Mammary epithelial cell (primary cell): ENCODE measurements at regions of chr2 and their contacts with region 1.

Region 1: GRCh38 chr2:64488050-64488974 is 34.4 kb downstream of the LGALSL start:
- DNase-seq: peak; percentile 48
- H3K4me3 ChIP-seq: no peak overlapping the region
- H3K27ac ChIP-seq: no peak overlapping the region
- H3K4me1 ChIP-seq: peaks cover 20% of the 10 kb centered on the region
- H3K27me3 ChIP-seq: no peaks in the 10 kb centered on the region
- CTCF ChIP-seq: peak; percentile 85 to 93

Region 2: DNA sequence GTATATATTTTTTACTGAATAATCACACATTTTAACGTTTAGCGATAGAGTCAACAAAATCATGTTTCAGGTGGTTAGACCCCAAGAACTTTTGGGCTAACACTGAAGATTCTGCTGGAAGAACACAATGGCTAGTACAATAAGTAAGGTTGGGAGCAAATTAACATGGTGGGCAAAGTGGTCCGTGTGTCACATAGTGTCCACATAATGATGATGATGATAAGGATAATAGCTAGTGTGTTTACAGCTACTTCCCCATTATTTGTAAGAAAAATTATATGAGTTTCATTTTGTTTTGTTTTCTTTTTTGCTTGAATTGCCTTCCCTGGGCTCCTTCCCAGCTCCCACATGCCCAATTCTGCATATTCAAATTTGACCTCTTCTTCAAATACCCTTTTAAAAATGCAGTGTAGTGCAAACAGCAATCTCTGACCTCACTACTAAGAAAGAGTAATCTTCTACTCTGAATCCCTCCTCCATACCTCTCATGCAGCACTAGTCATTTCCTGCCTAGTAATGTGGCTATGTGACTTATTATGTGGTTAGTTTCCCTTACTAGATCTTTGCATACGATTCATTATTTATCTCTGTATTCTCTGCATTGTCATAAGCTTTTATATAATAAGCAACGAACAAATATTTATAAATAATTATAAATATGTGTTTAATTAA is 452.1 kb before region 1 on chr2:
- CTCF ChIA-PET with region 1: no interaction called
- dilution Hi-C with region 1: no loop called
- in situ Hi-C with region 1: loop called in 1 of 2 experiments (anchors 25 kb)
- intact Hi-C with region 1: no loop called
- DNase-seq: peak; percentile 78
- H3K4me3 ChIP-seq: no peak overlapping the region
- H3K27ac ChIP-seq: no peak overlapping the region
- H3K4me1 ChIP-seq: peaks cover 8% of the 10 kb centered on the region
- H3K27me3 ChIP-seq: no peaks in the 10 kb centered on the region
- CTCF ChIP-seq: no peak

Region 3: GRCh38 chr2:64062829-64063228 is 425.5 kb before region 1 on chr2:
- CTCF ChIA-PET with region 1: no interaction called
- dilution Hi-C with region 1: no loop called
- in situ Hi-C with region 1: loop called in 1 of 2 experiments (anchors 25 kb)
- intact Hi-C with region 1: no loop called
- DNase-seq: peak; percentile 91
- H3K4me3 ChIP-seq: no peak overlapping the region
- H3K27ac ChIP-seq: peak overlapping the region; percentile 20
- H3K4me1 ChIP-seq: peaks cover 15% of the 10 kb centered on the region
- H3K27me3 ChIP-seq: no peaks in the 10 kb centered on the region
- CTCF ChIP-seq: no peak

Region 4: DNA sequence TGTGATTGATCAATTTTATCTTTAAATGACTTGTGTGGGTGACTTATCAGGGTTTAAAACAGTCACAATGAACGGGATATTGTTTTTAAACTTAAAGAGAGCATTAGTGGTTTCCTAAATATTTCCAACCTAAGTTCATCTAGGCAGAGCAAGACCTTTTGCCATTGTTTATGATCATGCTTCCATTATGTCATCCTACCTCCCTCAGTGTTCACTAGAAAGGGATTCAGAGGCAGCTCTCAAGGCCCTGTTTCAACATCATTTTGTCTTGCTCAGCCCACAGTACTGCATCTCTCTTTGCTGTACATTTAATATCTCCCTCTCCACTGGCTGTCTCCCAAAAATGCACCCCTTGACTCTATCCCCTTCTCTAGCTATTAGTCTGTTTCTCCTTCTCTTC is 322.6 kb before region 1 on chr2:
- CTCF ChIA-PET with region 1: no interaction called
- dilution Hi-C with region 1: no loop called
- in situ Hi-C with region 1: no loop called
- intact Hi-C with region 1: loop called (anchors 10 kb)
- DNase-seq: peak; percentile 78
- H3K4me3 ChIP-seq: no peak overlapping the region
- H3K27ac ChIP-seq: no peak overlapping the region
- H3K4me1 ChIP-seq: peaks cover 16% of the 10 kb centered on the region
- H3K27me3 ChIP-seq: no peaks in the 10 kb centered on the region
- CTCF ChIP-seq: no peak

Region 5: GRCh38 chr2:64453770-64454385 is 34.4 kb before region 1 on chr2 and contains the start of gene LGALSL:
- CTCF ChIA-PET with region 1: no interaction called
- dilution Hi-C with region 1: no loop called
- in situ Hi-C with region 1: no loop called
- intact Hi-C with region 1: loop called (anchors 5 kb)
- DNase-seq: peak; percentile 71
- H3K4me3 ChIP-seq: peak within 1 kb of the TSS; percentile 67 to 78 (median 68)
- H3K27ac ChIP-seq: peak within 1 kb of the TSS; percentile 91
- H3K4me1 ChIP-seq: peaks cover 23% of the 10 kb centered on the region
- H3K27me3 ChIP-seq: no peaks in the 10 kb centered on the region
- CTCF ChIP-seq: no peak
- total RNA-seq, gene LGALSL: 11.8 to 23.3 TPM